Vagina (tissue), 2 donors: ENCODE measurements at regions of chr12 and their contacts with region 1.

Region 1: GRCh38 chr12:79555028-79555930 is 135.5 kb downstream of the PAWR start:
- DNase-seq: no peak
- H3K4me3 ChIP-seq: no peak overlapping the region
- H3K27ac ChIP-seq: peak overlapping the region; percentile 63
- H3K4me1 ChIP-seq: peaks cover 36% of the 10 kb centered on the region
- H3K27me3 ChIP-seq: no peaks in the 10 kb centered on the region
- CTCF ChIP-seq: peak in 2 of 3 experiments; percentile 29 to 52
- POLR2A ChIP-seq: no peak

Region 2: GRCh38 chr12:79454338-79454843 is 100.9 kb before region 1 on chr12:
- intact Hi-C with region 1: no loop called
- DNase-seq: no peak
- H3K4me3 ChIP-seq: no peak overlapping the region
- H3K27ac ChIP-seq: peak overlapping the region; percentile 31
- H3K4me1 ChIP-seq: peaks cover 42% of the 10 kb centered on the region
- H3K27me3 ChIP-seq: no peaks in the 10 kb centered on the region
- CTCF ChIP-seq: no peak
- POLR2A ChIP-seq: no peak

Region 3: DNA sequence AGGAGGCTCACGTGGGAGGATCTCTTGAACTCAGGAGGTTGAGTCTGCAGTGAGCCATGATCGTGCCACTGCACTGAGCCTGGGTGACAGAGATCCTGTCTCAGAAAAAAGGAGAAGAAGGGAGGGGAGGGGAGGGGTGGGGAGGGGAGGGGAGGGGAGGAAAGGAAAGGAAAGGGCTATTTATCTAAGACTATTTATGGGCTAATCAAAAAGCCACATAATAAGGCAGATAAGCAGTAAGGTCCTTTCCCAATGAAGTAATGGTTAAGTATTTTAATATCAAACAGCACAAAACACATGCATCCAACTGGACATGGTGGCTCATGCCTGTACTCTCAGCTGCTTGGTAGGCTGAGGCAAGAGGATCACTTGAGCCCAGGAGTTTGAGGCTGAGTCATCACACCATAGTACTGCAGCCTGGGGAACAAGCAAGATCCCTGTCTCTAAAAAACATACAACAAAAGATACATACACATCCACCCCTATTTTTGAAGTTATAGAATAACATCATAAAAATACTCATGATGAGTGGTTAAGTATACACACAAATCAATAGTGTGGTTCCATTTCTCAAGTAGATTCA is 125.8 kb after region 1 on chr12:
- intact Hi-C with region 1: no loop called
- DNase-seq: no peak
- H3K4me3 ChIP-seq: no peak overlapping the region
- H3K27ac ChIP-seq: no peak overlapping the region
- H3K4me1 ChIP-seq: peaks cover 35% of the 10 kb centered on the region
- H3K27me3 ChIP-seq: no peaks in the 10 kb centered on the region
- CTCF ChIP-seq: no peak
- POLR2A ChIP-seq: no peak

Region 4: GRCh38 chr12:80186727-80187217 is 631.5 kb after region 1 on chr12:
- intact Hi-C with region 1: loop called (anchors 10 kb)
- DNase-seq: no peak
- H3K4me3 ChIP-seq: no peak overlapping the region
- H3K27ac ChIP-seq: peak overlapping the region; percentile 83
- H3K4me1 ChIP-seq: peaks cover 9% of the 10 kb centered on the region
- H3K27me3 ChIP-seq: no peaks in the 10 kb centered on the region
- CTCF ChIP-seq: peak; percentile 64 to 71 (median 65)
- POLR2A ChIP-seq: no peak

Region 5: DNA sequence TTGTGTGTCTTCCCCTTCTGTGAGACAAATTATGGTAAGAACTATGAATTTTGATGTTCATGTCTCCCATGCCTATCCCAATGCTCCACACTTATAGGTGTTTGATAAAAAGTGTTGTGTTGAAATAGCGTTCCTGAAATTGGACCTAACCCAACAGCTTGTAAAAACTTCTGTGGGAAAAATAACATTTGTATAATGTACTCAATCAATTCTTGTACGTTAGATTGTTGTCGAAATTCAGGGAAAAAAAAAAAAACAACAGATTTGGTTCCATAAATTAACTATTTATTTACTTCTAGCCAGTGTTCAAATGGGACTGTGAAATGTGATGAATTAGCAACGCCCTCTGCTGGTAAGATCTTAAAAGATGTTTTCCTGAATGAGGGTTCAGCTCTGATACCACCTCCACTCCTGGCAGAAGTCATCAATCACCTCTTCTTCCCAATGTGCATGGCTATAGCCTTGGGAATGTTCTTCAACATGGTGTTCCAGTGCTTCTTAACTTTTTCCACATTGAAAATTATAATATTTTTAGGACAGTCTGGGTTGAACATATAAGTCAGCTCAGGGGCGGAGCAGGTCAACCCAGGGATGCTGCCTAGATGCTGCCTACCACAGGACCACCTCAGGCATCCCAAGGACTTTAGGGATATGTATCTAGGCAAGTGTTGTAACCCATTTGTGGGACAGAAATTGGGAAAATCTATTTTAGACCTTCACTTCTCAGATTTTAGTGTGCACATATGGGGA is 714.7 kb after region 1 on chr12:
- intact Hi-C with region 1: loop called (anchors 10 kb)
- DNase-seq: no peak
- H3K4me3 ChIP-seq: no peak overlapping the region
- H3K27ac ChIP-seq: no peak overlapping the region
- H3K4me1 ChIP-seq: peaks cover 4% of the 10 kb centered on the region
- H3K27me3 ChIP-seq: no peaks in the 10 kb centered on the region
- CTCF ChIP-seq: peak in 2 of 3 experiments; percentile 22 to 51
- POLR2A ChIP-seq: no peak